ENCODE measurements at regions of chr5 and their contacts with region 1.

Region 1: DNA sequence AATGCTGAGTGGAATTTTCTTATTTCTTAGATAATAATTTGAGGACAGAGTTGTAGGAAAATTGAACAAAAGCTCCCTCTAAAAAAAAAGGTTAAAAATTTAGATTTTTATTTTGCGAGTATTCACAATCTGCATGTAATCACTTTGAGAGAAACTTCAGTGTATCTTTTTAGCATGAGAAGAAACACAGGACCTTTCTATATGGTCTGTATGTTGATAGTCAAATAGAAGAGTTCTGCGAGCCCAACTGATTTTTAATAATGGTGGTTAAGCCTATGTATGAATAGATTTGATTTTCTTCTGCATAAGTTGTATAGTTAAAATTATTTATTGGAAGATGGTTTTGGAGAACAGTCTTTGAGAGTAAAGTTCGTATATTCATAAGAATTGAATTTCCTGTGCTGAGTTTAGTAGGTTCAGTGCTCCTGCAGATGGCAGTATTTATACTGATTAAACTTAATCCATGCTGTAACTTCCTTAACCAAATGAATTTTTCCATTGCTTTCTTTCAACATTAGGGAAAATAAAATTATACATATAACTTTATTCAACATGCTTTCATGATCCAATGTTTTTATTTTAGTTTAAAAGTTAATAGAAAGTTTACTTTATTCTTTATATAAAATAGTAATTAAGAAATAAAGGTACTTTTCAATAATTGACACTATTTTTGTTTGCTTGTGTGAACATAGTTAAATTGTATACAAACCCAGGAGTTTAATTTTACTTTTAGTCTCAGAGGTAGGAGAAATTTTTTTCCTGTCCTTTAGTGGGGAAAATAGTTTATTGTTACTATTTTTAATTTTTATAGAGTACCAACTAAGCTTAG is 19.6 kb downstream of the TCERG1 start:
- DNase-seq: no peak
- H3K4me3 ChIP-seq: no peak overlapping the region
- H3K27ac ChIP-seq: no peak overlapping the region
- H3K4me1 ChIP-seq: peaks cover 0 to 9% (median 0%) of the 10 kb centered on the region in 4 donors
- H3K27me3 ChIP-seq: no peaks in the 10 kb centered on the region
- CTCF ChIP-seq: peak in 2 of 3 experiments; percentile 21 to 35
- EP300 ChIP-seq: no peak
- POLR2A ChIP-seq: no peak

Region 2: DNA sequence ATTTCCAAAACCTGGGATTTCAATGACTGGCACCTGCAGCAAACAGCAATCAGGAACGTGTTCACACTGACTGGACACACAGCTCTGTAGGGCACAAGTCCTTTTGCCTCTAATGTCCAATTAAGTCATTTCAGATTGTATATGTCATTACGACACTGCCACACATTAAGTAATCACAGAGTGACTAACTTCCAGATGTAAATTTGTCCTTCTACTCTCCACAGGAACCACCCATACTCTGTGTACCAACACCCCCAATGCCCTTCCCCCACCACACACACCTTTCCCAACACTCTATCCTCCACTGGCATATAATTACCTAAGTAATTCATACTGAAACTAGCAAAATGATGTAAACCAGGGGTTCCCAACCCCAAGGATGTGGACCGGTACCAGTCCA is 314.8 kb before region 1 on chr5:
- intact Hi-C with region 1: loop called (anchors 10 kb)
- DNase-seq: no peak
- H3K4me3 ChIP-seq: no peak overlapping the region
- H3K27ac ChIP-seq: no peak overlapping the region
- H3K4me1 ChIP-seq: no peaks in the 10 kb centered on the region
- H3K27me3 ChIP-seq: no peaks in the 10 kb centered on the region
- CTCF ChIP-seq: no peak
- EP300 ChIP-seq: no peak
- POLR2A ChIP-seq: no peak

Measured in esophagus muscularis mucosa (tissue), 4 donors.